ENCODE measurements at regions of chr3 and their contacts with region 1.

Region 1: DNA sequence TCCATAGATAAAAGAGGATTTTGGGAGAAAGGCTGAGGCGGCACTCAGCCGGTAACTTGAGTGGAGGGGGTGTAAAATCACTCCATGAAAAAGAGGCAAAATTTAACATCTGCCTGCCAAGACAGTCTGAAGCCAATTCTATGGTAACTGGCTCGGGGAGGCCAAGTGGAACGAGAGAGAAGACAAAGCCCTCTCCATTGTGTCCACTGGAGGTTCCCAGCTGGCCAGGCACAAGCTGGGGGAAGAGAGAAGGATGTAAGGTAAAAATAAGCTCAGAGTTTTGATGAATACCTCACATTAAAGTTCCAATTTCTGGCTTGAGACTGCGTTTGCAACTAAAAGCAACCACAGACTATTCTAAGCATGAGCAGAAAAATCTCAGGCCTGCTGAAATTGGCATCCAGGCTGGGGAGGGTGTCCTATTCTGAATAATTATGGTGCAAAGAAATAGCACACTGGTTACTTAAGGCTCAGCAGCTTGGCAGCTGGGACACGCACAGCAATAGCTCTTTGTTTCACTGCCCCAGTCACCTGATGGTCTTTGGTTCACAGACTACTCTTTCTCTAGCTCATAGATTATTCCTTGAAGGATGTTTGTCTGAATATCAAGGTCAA is 48.8 kb downstream of the CHRD start:
- DNase-seq: no peak
- ATAC-seq: no peak
- H3K4me3 ChIP-seq: no peak overlapping the region
- H3K4me3 Mint-ChIP-seq: no peak overlapping the region
- H3K27ac ChIP-seq: no peak overlapping the region
- H3K27ac Mint-ChIP-seq: no peak overlapping the region
- H3K4me1 ChIP-seq: no peaks in the 10 kb centered on the region
- H3K4me1 Mint-ChIP-seq: no peaks in the 10 kb centered on the region
- H3K27me3 ChIP-seq: no peaks in the 10 kb centered on the region
- H3K27me3 Mint-ChIP-seq: peaks cover 11% of the 10 kb centered on the region
- CTCF ChIP-seq: no peak

Region 2: DNA sequence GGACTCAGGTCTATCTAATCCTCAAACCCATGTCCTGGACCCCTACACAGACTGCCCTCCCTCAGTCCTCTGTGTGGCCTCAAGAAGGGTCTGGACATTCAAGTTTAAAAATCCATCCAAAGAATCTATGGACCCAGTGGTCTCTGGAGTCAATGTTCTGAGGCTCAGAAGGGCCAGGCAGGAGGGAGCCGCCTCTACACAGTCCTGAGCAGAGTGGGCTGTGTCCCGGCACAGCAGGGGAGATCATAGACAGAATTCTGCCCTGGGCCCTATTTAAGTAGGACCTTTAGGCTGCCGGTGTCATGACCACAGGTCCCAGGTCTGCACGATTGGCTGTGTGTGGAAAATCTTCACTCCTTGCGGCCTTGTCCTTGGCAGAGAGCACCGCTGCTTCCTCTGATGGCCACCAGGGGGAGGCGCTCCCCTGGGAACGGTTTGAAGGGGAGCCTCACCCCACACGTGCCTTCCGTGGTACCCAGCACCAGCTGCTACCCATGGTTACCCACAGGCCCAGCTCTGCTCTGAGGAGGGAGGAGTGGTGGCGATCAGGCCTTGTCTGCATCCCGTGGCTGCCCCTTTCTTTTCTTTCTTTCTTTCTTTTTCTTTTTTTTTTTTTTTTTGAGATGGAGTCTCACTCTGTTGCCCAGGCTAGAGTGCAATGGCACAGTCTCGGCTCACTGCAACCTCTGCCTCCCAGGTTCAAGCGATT is 10.9 kb before region 1 on chr3:
- CTCF ChIA-PET with region 1: interaction called, 11 read pairs
- POLR2A ChIA-PET with region 1: no interaction called
- intact Hi-C with region 1: no loop called
- DNase-seq: peak; percentile 31 to 80 (median 72)
- ATAC-seq: peak; percentile 97
- H3K4me3 ChIP-seq: no peak overlapping the region
- H3K4me3 Mint-ChIP-seq: no peak overlapping the region
- H3K27ac ChIP-seq: no peak overlapping the region
- H3K27ac Mint-ChIP-seq: no peak overlapping the region
- H3K4me1 ChIP-seq: no peaks in the 10 kb centered on the region
- H3K4me1 Mint-ChIP-seq: no peaks in the 10 kb centered on the region
- H3K27me3 ChIP-seq: no peaks in the 10 kb centered on the region
- H3K27me3 Mint-ChIP-seq: peaks cover 1% of the 10 kb centered on the region
- CTCF ChIP-seq: peak; percentile 68

Measured in CD8-positive, alpha-beta T cell (primary cell).